Naive thymus-derived CD4-positive, alpha-beta T cell (primary cell): ENCODE measurements at regions of chr5 and their contacts with region 1.

Region 1: GRCh38 chr5:81851481-81852178 is 100.7 kb upstream of the SSBP2 start:
- DNase-seq: peak; percentile 76 to 92 (median 89)
- ATAC-seq: peak; percentile 95
- H3K4me3 ChIP-seq: peak overlapping the region; percentile 82
- H3K4me3 Mint-ChIP-seq: peak overlapping the region; percentile 92 to 98 (median 94)
- H3K27ac ChIP-seq: peak overlapping the region; percentile 71
- H3K27ac Mint-ChIP-seq: peak overlapping the region; percentile 96 to 100 (median 97)
- H3K4me1 ChIP-seq: peaks cover 18 to 22% of the 10 kb centered on the region in 2 donors
- H3K4me1 Mint-ChIP-seq: peaks cover 23 to 71% (median 56%) of the 10 kb centered on the region in 7 donors
- H3K27me3 ChIP-seq: no peaks in the 10 kb centered on the region
- H3K27me3 Mint-ChIP-seq: no peaks in the 10 kb centered on the region

Region 2: DNA sequence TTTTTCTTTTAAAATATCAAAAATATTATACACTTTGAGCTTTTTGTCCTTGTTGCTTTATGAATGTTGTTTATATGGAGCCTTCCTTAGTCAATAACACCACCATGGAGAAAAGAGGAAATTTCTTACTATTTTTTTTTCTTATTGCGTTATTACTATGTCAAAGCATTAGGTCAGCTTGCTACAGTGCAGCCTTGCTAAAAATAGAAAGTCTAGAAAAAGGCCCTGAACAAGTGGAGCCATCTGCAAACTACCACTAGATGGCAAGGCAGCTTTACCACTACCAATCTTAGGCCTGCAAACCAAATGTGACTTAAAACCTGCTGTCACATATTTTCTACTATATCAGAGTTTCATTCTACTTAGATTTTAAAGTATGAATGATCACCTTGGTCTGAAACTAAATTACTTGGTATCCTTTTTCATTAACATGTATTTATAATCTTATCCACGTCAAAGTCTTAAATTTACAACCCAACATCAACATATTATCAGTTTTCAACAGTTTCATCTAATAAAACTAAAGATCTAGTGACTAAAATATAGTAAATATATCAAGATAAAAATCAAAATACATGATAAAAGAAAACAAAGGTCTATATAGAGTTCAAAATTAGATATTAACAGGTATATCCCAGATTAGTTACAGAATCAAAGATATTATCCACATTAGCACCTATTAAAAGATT is 344.6 kb before region 1 on chr5:
- CTCF ChIA-PET with region 1: interaction called, 4 read pairs
- POLR2A ChIA-PET with region 1: no interaction called
- intact Hi-C with region 1: loop called (anchors 1 kb)
- DNase-seq: peak in 7 of 9 donors; percentile 34 to 66 (median 55)
- ATAC-seq: peak; percentile 96
- H3K4me3 ChIP-seq: no peak overlapping the region
- H3K4me3 Mint-ChIP-seq: no peak overlapping the region
- H3K27ac ChIP-seq: no peak overlapping the region
- H3K27ac Mint-ChIP-seq: no peak overlapping the region
- H3K4me1 ChIP-seq: no peaks in the 10 kb centered on the region
- H3K4me1 Mint-ChIP-seq: peaks cover 0 to 27% (median 8%) of the 10 kb centered on the region in 7 donors
- H3K27me3 ChIP-seq: no peaks in the 10 kb centered on the region
- H3K27me3 Mint-ChIP-seq: no peaks in the 10 kb centered on the region

Region 3: DNA sequence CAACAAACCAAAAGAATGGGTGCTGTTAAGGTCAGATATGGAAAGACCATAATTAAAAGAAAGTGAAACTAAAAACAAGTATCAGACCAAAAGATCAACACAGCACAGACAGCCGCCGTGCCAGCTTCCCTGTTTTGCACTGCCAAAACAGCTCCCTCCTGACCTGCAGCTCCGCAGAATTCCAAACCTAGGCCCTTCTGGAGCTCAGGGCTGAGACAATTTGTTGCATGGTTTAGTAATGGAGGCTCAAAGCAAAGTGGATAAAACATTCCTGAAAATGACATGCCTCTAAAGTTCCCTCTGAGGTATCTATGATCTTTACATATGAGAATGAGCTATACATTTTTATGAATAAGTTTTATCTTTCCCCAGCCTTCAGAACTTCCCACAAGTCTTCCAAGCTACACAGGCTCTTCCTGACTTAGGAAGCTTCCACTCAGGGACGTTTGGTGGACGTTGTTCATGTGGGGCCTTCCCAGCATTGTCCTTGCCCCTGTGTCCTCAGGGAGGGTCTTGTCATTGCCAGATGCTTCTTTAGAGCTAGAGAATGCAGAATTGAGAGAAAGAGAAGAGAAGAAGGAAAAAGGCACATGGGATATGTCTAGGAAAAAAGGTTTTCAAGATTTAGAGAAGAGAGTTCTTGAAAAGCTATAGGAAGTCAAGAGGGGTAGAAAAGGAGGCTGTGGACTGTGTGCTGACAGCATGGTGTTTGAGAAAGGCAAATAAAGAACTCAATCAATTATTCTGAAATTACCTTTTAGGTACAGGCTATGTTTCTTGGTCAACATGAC is 72.3 kb before region 1 on chr5:
- CTCF ChIA-PET with region 1: interaction called, 4 read pairs
- POLR2A ChIA-PET with region 1: interaction called, 22 read pairs
- intact Hi-C with region 1: loop called (anchors 1 kb)
- DNase-seq: peak in 8 of 9 donors; percentile 14 to 48 (median 36)
- ATAC-seq: peak; percentile 74
- H3K4me3 ChIP-seq: peak overlapping the region; percentile 51
- H3K4me3 Mint-ChIP-seq: peak overlapping the region; percentile 82 to 92 (median 88)
- H3K27ac ChIP-seq: peak overlapping the region; percentile 70
- H3K27ac Mint-ChIP-seq: peak overlapping the region; percentile 94 to 100 (median 95)
- H3K4me1 ChIP-seq: peaks cover 5 to 9% of the 10 kb centered on the region in 2 donors
- H3K4me1 Mint-ChIP-seq: peaks cover 9 to 35% (median 29%) of the 10 kb centered on the region in 7 donors
- H3K27me3 ChIP-seq: no peaks in the 10 kb centered on the region
- H3K27me3 Mint-ChIP-seq: no peaks in the 10 kb centered on the region

Region 4: GRCh38 chr5:81819556-81820317 is 31.9 kb before region 1 on chr5:
- CTCF ChIA-PET with region 1: no interaction called
- POLR2A ChIA-PET with region 1: interaction called, 8 read pairs
- intact Hi-C with region 1: loop called in 1 of 2 experiments (anchors 1 kb)
- DNase-seq: no peak
- ATAC-seq: no peak
- H3K4me3 ChIP-seq: no peak overlapping the region
- H3K4me3 Mint-ChIP-seq: peak overlapping the region in 3 of 10 donors; percentile 15 to 39 (median 35)
- H3K27ac ChIP-seq: no peak overlapping the region
- H3K27ac Mint-ChIP-seq: peak overlapping the region in 8 of 9 donors; percentile 9 to 83 (median 46)
- H3K4me1 ChIP-seq: peaks cover 0 to 31% of the 10 kb centered on the region in 2 donors
- H3K4me1 Mint-ChIP-seq: peaks cover 30 to 63% (median 54%) of the 10 kb centered on the region in 7 donors
- H3K27me3 ChIP-seq: no peaks in the 10 kb centered on the region
- H3K27me3 Mint-ChIP-seq: peaks cover 0 to 3% (median 0%) of the 10 kb centered on the region in 5 donors

Region 5: GRCh38 chr5:82068723-82069122 is 217.1 kb after region 1 on chr5:
- CTCF ChIA-PET with region 1: no interaction called
- POLR2A ChIA-PET with region 1: no interaction called
- intact Hi-C with region 1: loop called (anchors 5 kb)
- DNase-seq: peak in 6 of 9 donors; percentile 3 to 53 (median 47)
- ATAC-seq: peak; percentile 52
- H3K4me3 ChIP-seq: no peak overlapping the region
- H3K4me3 Mint-ChIP-seq: peak overlapping the region; percentile 27 to 84 (median 73)
- H3K27ac ChIP-seq: no peak overlapping the region
- H3K27ac Mint-ChIP-seq: peak overlapping the region in 7 of 9 donors; percentile 4 to 69 (median 58)
- H3K4me1 ChIP-seq: peaks cover 0 to 3% of the 10 kb centered on the region in 2 donors
- H3K4me1 Mint-ChIP-seq: peaks cover 0 to 21% (median 5%) of the 10 kb centered on the region in 7 donors
- H3K27me3 ChIP-seq: no peaks in the 10 kb centered on the region
- H3K27me3 Mint-ChIP-seq: no peaks in the 10 kb centered on the region

Region 6: GRCh38 chr5:82278095-82278918 is 426.7 kb after region 1 on chr5 and contains the start of gene RPS23:
- CTCF ChIA-PET with region 1: no interaction called
- POLR2A ChIA-PET with region 1: no interaction called
- intact Hi-C with region 1: loop called (anchors 1 kb)
- DNase-seq: peak; percentile 78 to 90 (median 85)
- ATAC-seq: peak; percentile 96
- H3K4me3 ChIP-seq: peak within 1 kb of the TSS; percentile 72
- H3K4me3 Mint-ChIP-seq: peak within 1 kb of the TSS; percentile 87 to 98 (median 94)
- H3K27ac ChIP-seq: peak within 1 kb of the TSS; percentile 80
- H3K27ac Mint-ChIP-seq: peak within 1 kb of the TSS; percentile 94 to 99 (median 96)
- H3K4me1 ChIP-seq: peaks cover 12 to 16% of the 10 kb centered on the region in 2 donors
- H3K4me1 Mint-ChIP-seq: peaks cover 13 to 65% (median 39%) of the 10 kb centered on the region in 7 donors
- H3K27me3 ChIP-seq: no peaks in the 10 kb centered on the region
- H3K27me3 Mint-ChIP-seq: no peaks in the 10 kb centered on the region
- total RNA-seq, gene RPS23: 2,233 to 4,335 (median 3,874) TPM